Naive thymus-derived CD4-positive, alpha-beta T cell (primary cell): ENCODE measurements at regions of chr7 and their contacts with region 1.

Region 1: GRCh38 chr7:150538259-150538658 is 23.6 kb downstream of the GIMAP7 start:
- DNase-seq: peak in 1 of 9 donors; percentile 20
- ATAC-seq: no peak
- H3K4me3 ChIP-seq: no peak overlapping the region
- H3K4me3 Mint-ChIP-seq: peak overlapping the region in 1 of 10 donors; percentile 16
- H3K27ac ChIP-seq: no peak overlapping the region
- H3K27ac Mint-ChIP-seq: peak overlapping the region in 1 of 9 donors; percentile 43
- H3K4me1 ChIP-seq: no peaks in the 10 kb centered on the region
- H3K4me1 Mint-ChIP-seq: peaks cover 3 to 39% (median 20%) of the 10 kb centered on the region in 7 donors
- H3K27me3 ChIP-seq: no peaks in the 10 kb centered on the region
- H3K27me3 Mint-ChIP-seq: no peaks in the 10 kb centered on the region

Region 2: GRCh38 chr7:150556521-150557138 is 18.4 kb after region 1 on chr7:
- CTCF ChIA-PET with region 1: interaction called, 5 read pairs
- POLR2A ChIA-PET with region 1: interaction called, 217 read pairs
- intact Hi-C with region 1: loop called in 1 of 2 experiments (anchors 2 kb)
- DNase-seq: peak in 7 of 9 donors; percentile 45 to 84 (median 73)
- ATAC-seq: peak; percentile 99
- H3K4me3 ChIP-seq: peak overlapping the region; percentile 42
- H3K4me3 Mint-ChIP-seq: peak overlapping the region; percentile 48 to 92 (median 78)
- H3K27ac ChIP-seq: peak overlapping the region; percentile 66
- H3K27ac Mint-ChIP-seq: peak overlapping the region; percentile 89 to 99 (median 94)
- H3K4me1 ChIP-seq: peaks cover 47 to 74% of the 10 kb centered on the region in 2 donors
- H3K4me1 Mint-ChIP-seq: peaks cover 45 to 95% (median 90%) of the 10 kb centered on the region in 7 donors
- H3K27me3 ChIP-seq: no peaks in the 10 kb centered on the region
- H3K27me3 Mint-ChIP-seq: no peaks in the 10 kb centered on the region

Region 3: DNA sequence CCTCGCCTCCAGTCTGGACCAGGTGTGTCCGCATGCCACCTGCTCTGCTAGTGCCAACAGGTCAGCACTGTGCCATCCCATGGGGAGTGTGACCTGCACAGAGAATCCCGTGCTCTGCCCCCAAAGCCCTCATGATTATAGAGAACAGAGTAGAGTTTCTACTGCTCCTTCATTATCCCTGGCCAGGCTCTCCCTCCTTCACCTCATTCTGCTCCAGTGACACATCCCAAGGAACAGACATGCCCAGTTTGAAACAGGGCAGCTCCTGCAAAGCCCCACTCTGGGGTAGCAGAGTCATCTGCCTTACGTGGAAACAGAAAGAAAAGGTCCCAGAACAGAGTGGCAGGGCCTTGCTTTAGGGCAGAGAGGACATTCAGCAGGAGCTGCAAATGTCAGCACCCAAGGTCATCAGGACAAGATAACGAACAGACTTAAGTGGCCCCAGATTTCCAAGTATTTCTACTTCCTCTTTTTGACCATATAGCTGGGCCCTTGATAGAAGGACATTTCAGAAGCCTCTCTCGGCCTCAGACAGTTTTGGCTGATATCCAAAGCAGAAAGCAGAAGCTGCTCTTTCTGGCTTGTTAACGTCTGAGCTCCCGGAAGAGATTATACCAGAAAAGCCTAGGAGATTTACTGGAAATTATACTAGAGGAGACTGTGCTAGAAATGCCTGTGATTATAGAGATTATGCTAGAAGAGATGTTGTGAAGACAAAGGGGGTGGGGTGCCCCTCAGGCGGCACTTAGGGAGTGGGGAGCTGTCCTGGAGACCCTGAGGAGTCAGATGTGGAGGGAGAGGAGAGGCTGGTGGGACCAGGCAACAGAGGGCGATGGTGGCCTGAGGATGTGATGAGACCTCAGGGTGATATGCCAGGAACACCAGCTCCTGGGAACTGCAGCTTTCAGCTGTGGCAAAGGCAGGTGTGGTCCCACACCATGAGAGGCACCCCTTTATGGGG is 249.3 kb after region 1 on chr7:
- CTCF ChIA-PET with region 1: no interaction called
- POLR2A ChIA-PET with region 1: no interaction called
- intact Hi-C with region 1: no loop called
- DNase-seq: no peak
- ATAC-seq: peak; percentile 78
- H3K4me3 ChIP-seq: no peak overlapping the region
- H3K4me3 Mint-ChIP-seq: no peak overlapping the region
- H3K27ac ChIP-seq: no peak overlapping the region
- H3K27ac Mint-ChIP-seq: no peak overlapping the region
- H3K4me1 ChIP-seq: no peaks in the 10 kb centered on the region
- H3K4me1 Mint-ChIP-seq: peaks cover 0 to 12% (median 0%) of the 10 kb centered on the region in 7 donors
- H3K27me3 ChIP-seq: no peaks in the 10 kb centered on the region
- H3K27me3 Mint-ChIP-seq: peaks cover 0 to 18% (median 6%) of the 10 kb centered on the region in 5 donors